ENCODE measurements at regions of chr11 and their contacts with region 1.

Region 1: DNA sequence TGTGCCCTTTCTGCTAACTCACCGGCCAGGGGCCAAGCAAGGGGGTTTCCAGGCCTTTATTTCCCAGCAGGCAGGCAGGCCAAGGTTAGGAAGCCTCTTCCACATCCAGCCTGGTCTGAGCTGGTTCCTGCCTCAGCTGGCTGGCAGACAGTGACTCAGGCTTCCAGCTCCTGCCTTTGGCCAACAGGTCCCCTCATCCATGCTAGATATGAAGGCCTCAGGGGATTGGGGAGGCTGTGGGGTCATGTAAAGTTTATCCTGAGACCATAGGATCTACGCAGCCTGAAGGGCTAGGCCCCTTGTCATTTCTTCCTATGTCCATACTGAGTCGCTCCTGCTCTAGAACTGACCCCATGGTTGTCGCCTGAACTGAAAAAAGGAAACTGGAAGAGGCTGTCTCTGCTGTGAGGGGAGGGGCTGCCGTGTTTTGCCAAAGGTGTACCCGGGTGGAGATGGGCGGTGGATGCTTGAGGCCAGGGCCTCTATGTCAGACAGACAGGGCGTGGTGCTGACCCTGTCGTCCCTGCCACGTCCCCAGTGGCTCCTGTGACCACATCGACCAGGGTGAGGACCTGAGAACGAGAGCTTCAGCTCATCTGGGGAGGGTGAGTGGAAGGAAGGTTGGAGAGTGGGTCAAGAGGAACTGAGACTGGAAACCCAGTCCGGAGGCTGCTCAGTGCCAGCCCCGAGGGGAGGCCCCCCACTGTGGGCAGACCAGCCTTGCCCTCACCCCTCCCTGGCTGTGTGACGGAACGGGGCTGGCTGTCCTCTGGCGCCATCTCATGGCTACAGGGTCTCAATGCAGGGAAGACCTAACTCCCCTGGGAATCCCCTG is 17.0 kb downstream of the P2RY6 start:
- H3K4me3 ChIP-seq: peak overlapping the region; percentile 29
- H3K27ac ChIP-seq: no peak overlapping the region; the same call in 1 of the 2 replicates
- H3K4me1 ChIP-seq: no peaks in the 10 kb centered on the region
- CTCF ChIP-seq: peak; percentile 83

Region 2: GRCh38 chr11:73184953-73185671 is 104.0 kb before region 1 on chr11:
- CTCF ChIA-PET with region 1: interaction called, 23 read pairs
- POLR2A ChIA-PET with region 1: no interaction called
- H3K4me3 ChIP-seq: no peak overlapping the region
- H3K27ac ChIP-seq: no peak overlapping the region
- H3K4me1 ChIP-seq: no peaks in the 10 kb centered on the region
- CTCF ChIP-seq: peak; percentile 52

Region 3: GRCh38 chr11:73236854-73237253 is 52.2 kb before region 1 on chr11:
- CTCF ChIA-PET with region 1: interaction called, 19 read pairs
- POLR2A ChIA-PET with region 1: no interaction called
- H3K4me3 ChIP-seq: no peak overlapping the region
- H3K27ac ChIP-seq: no peak overlapping the region
- H3K4me1 ChIP-seq: no peaks in the 10 kb centered on the region
- CTCF ChIP-seq: peak; percentile 22; the same call in 1 of the 2 replicates

Region 4: GRCh38 chr11:73242251-73243079 is 46.6 kb before region 1 on chr11:
- CTCF ChIA-PET with region 1: interaction called, 19 read pairs
- POLR2A ChIA-PET with region 1: no interaction called
- H3K4me3 ChIP-seq: peak overlapping the region; percentile 27
- H3K27ac ChIP-seq: no peak overlapping the region; the same call in 1 of the 2 replicates
- H3K4me1 ChIP-seq: no peaks in the 10 kb centered on the region
- CTCF ChIP-seq: no peak; the same call in 1 of the 2 replicates

Region 5: DNA sequence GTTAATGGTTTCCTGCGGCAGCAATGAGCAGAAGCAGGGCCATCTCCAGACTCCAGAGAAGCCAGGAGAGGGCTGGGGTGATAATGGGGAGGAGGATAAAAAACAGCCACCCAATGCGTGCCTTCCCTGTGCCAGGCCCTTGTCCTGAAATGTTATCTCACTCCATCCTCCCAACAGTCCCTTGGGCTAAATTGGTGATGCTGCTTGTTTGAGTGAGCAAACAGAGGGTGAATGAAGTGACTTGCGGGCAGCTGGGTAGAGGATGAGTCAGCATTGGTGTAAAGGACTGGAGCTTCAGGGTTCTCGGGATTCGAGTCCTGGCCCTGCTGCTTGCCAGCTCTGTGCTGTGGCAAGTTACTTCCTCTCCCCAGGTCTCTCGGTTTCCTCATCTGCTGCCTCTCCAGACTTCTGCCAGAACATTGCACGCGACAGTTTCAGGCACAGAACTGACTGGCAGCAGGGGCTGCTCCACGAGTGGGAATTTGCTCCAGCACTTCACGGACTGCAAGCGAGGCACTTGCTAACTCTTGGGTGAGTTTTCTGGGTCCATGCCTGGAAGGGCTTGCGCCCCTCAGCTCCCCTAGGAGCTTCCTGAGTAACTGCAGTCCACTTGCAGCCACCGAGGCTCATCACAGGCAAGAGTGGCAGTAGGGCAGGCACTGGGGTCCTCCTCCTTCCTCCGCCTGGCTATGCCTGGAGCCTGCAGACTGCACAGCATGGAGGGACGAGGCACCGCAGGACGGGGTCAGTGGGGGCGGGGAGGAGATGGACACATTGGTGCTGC is 17.0 kb before region 1 on chr11 and contains the start of gene P2RY6:
- CTCF ChIA-PET with region 1: interaction called, 25 read pairs
- POLR2A ChIA-PET with region 1: no interaction called
- H3K4me3 ChIP-seq: no peak within 1 kb of the TSS
- H3K27ac ChIP-seq: no peak within 1 kb of the TSS
- H3K4me1 ChIP-seq: no peaks in the 10 kb centered on the region
- CTCF ChIP-seq: no peak

Region 6: GRCh38 chr11:73693899-73694525 is 404.9 kb after region 1 on chr11:
- CTCF ChIA-PET with region 1: no interaction called
- POLR2A ChIA-PET with region 1: no interaction called
- H3K4me3 ChIP-seq: no peak overlapping the region
- H3K27ac ChIP-seq: no peak overlapping the region
- H3K4me1 ChIP-seq: no peaks in the 10 kb centered on the region
- CTCF ChIP-seq: no peak